ENCODE measurements at regions of chr3 and their contacts with region 1.

Region 1: DNA sequence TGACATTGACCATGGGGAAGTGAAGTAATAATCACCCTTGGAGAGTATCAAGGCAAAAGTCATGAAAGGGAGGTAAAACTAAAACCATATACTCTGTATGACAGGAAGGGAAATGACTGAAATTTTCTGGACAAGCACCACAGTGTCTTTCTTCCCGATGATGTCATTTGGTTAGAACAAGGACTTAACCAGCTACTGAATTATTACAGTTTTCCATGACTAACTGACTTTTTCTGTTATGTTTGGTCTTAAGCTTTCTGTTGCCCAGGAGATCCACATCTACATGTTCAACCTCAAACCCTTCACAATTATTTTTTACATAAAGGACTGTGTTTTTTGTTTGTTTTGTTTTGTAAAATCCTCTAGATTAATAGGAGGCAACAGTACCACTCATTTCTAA is 191.9 kb upstream of the IL12A start:
- DNase-seq: no peak
- H3K4me3 ChIP-seq: no peak overlapping the region
- H3K27ac ChIP-seq: no peak overlapping the region
- H3K4me1 ChIP-seq: peaks cover 0 to 5% (median 0%) of the 10 kb centered on the region in 4 experiments; a peak in 2 of 7 replicates
- H3K27me3 ChIP-seq: no peaks in the 10 kb centered on the region
- CTCF ChIP-seq: no peak
- EP300 ChIP-seq: no peak
- POLR2A ChIP-seq: no peak
- RAD21 ChIP-seq: no peak

Region 2: DNA sequence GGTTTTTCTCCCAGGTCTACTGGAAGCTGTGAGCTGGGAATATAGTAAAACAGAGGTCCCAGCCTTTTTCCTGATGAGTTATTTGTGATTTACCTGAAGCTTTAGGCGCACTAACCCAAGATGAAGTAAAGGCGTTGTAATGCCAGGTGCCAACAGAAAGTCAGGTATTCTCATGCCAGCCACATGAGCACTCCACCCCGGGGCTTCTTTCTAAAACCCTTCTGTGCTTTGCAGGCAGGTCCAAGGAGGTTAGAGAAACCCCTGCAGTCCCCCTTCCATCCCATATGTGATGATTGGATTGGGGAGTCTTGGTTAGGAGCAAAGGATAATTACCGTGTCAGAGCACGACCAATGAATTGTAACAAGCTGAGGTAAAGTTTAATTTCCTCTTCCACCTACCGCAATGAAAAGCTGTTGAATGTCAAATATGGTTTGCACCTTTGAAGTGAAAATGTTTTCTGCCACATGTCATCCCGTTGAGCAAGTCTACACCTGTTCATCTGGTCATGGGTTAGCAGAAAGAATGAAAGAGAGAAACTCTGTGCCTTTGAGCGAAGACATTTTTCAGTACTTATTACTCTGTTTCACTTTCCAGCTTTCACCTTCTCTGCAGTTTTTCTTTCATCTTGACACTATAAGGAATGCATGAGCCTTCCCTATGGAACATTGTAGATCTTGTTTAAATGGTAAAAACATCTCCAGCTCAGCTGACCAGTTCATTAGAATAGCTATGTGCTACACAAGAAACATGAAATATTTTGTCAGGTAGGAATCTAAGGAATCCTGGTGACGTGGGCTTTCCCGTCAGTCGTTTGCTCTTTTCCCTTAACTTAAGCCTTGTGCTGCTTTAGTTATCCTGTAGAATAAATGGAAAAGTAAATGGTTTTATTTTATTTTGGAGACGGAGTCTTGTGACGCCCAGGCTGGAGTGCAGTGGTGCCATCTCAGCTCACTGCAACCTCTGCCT is 12.7 kb before region 1 on chr3:
- CTCF ChIA-PET with region 1: interaction called, 96 read pairs
- POLR2A ChIA-PET with region 1: interaction called, 4 read pairs
- DNase-seq: no peak
- H3K4me3 ChIP-seq: no peak overlapping the region
- H3K27ac ChIP-seq: no peak overlapping the region
- H3K4me1 ChIP-seq: peaks cover 0 to 7% (median 0%) of the 10 kb centered on the region in 4 experiments; a peak in 6 of 7 replicates
- H3K27me3 ChIP-seq: no peaks in the 10 kb centered on the region
- CTCF ChIP-seq: no peak
- EP300 ChIP-seq: no peak
- POLR2A ChIP-seq: no peak
- RAD21 ChIP-seq: no peak

Region 3: DNA sequence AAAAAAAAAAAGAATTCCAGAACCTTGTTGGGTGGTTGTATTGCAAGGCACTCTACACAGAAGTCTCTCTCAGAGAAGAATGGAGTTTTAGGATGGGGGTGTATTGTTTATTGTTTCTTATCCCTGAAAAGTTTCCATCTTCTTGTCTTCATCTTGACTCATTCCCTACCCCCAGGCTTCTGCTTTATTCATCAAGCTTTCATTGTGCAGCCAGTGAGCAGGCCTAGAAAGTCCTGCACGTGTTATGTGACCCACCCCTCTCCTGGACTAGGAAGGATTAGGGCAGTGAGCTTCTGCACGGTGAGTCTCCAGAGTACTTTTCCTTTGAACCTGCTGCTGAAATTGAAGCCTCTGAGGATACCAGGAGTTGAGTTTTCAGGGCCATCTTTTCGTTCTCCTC is 41.0 kb after region 1 on chr3:
- CTCF ChIA-PET with region 1: no interaction called
- POLR2A ChIA-PET with region 1: no interaction called
- DNase-seq: no peak
- H3K4me3 ChIP-seq: no peak overlapping the region
- H3K27ac ChIP-seq: no peak overlapping the region
- H3K4me1 ChIP-seq: peaks cover 0 to 8% (median 0%) of the 10 kb centered on the region in 4 experiments; a peak in 1 of 7 replicates
- H3K27me3 ChIP-seq: no peaks in the 10 kb centered on the region
- CTCF ChIP-seq: no peak
- EP300 ChIP-seq: no peak
- POLR2A ChIP-seq: no peak
- RAD21 ChIP-seq: no peak